Panc1 (cell line): ENCODE measurements at regions of chr5 and their contacts with region 1.

Region 1: DNA sequence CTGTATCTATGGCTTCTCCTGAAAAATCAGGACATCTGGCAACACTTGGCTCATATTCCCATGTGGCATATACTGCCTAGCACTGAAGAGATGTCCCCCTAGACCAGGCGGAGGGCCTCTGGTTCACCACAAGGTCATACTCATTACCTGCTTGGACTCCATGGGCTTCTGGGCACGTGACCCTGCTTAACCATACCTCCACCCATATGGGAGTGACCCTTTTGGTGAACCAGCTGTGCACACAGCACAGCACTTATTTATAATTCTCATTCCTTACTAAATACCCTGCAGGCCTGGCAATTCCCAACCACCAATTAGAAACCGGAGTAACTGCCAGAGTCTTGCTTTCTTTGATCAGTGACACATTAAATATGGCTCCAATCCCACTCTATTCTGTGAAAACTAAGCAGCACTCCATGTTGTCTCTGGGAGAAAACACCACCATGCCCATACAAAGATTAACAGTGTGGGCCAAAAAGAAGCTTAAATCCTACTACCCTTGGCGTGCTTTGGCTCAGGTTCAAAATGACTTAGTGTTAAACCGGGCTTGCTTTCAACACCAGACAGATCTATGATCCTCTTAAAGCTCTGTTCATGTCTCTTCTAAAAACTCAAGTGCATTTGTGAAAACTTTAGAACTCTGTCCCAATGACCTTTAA is 57.7 kb downstream of the MTMR12 start:
- DNase-seq: no peak
- ATAC-seq: no peak
- H3K4me3 ChIP-seq: no peak overlapping the region
- H3K27ac ChIP-seq: no peak overlapping the region
- H3K4me1 ChIP-seq: no peaks in the 10 kb centered on the region
- H3K27me3 ChIP-seq: no peaks in the 10 kb centered on the region
- CTCF ChIP-seq: no peak

Region 2: GRCh38 chr5:32223946-32224608 is 30.9 kb before region 1 on chr5:
- CTCF ChIA-PET with region 1: no interaction called
- POLR2A ChIA-PET with region 1: no interaction called
- in situ Hi-C with region 1: no loop called
- intact Hi-C with region 1: no loop called
- DNase-seq: no peak
- ATAC-seq: peak; percentile 67
- H3K4me3 ChIP-seq: no peak overlapping the region
- H3K27ac ChIP-seq: no peak overlapping the region; the same call in 1 of the 2 replicates
- H3K4me1 ChIP-seq: peaks cover 4% of the 10 kb centered on the region
- H3K27me3 ChIP-seq: no peaks in the 10 kb centered on the region
- CTCF ChIP-seq: no peak

Region 3: GRCh38 chr5:32551865-32552264 is 296.9 kb after region 1 on chr5:
- CTCF ChIA-PET with region 1: no interaction called
- POLR2A ChIA-PET with region 1: interaction called, 10 read pairs
- in situ Hi-C with region 1: no loop called
- intact Hi-C with region 1: no loop called
- DNase-seq: no peak
- ATAC-seq: no peak
- H3K4me3 ChIP-seq: no peak overlapping the region
- H3K27ac ChIP-seq: no peak overlapping the region
- H3K4me1 ChIP-seq: no peaks in the 10 kb centered on the region
- H3K27me3 ChIP-seq: no peaks in the 10 kb centered on the region
- CTCF ChIP-seq: no peak